Activated CD4-positive, alpha-beta memory T cell treated with anti-CD3 and anti-CD28 coated beads for 36 hours (primary cell): ENCODE measurements at regions of chr9 and their contacts with region 1.

Region 1: GRCh38 chr9:75238311-75238978 is 150.1 kb downstream of the OSTF1 start:
- DNase-seq: peak; percentile 51
- H3K4me3 Mint-ChIP-seq: no peak overlapping the region
- H3K27ac Mint-ChIP-seq: no peak overlapping the region
- H3K4me1 Mint-ChIP-seq: peaks cover 3% of the 10 kb centered on the region
- H3K27me3 Mint-ChIP-seq: no peaks in the 10 kb centered on the region

Region 2: DNA sequence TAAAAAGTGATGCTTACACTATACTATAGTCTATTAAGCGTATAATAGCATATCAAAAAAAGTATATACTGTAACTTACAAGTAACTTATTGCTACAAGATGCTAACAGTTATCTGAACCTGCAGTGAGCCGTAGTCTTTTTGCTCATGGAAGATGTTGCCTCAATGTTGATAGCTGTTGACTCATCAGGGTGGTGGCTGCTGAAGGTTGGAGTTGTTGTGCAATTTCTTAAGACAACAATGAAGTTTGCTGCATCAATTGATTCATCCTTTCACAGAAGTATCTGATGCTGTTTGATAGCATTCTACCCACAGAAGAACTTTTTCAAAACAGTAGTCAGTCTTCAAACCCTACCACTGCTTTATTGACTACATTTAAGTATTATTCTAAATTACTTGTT is 277.9 kb before region 1 on chr9:
- CTCF ChIA-PET with region 1: no interaction called
- POLR2A ChIA-PET with region 1: no interaction called
- intact Hi-C with region 1: no loop called
- DNase-seq: no peak
- H3K4me3 Mint-ChIP-seq: no peak overlapping the region
- H3K27ac Mint-ChIP-seq: no peak overlapping the region
- H3K4me1 Mint-ChIP-seq: no peaks in the 10 kb centered on the region
- H3K27me3 Mint-ChIP-seq: no peaks in the 10 kb centered on the region

Region 3: GRCh38 chr9:75142202-75142601 is 96.2 kb before region 1 on chr9:
- CTCF ChIA-PET with region 1: no interaction called
- POLR2A ChIA-PET with region 1: no interaction called
- intact Hi-C with region 1: no loop called
- DNase-seq: no peak
- H3K4me3 Mint-ChIP-seq: no peak overlapping the region
- H3K27ac Mint-ChIP-seq: peak overlapping the region; percentile 67
- H3K4me1 Mint-ChIP-seq: peaks cover 61% of the 10 kb centered on the region
- H3K27me3 Mint-ChIP-seq: no peaks in the 10 kb centered on the region

Region 4: DNA sequence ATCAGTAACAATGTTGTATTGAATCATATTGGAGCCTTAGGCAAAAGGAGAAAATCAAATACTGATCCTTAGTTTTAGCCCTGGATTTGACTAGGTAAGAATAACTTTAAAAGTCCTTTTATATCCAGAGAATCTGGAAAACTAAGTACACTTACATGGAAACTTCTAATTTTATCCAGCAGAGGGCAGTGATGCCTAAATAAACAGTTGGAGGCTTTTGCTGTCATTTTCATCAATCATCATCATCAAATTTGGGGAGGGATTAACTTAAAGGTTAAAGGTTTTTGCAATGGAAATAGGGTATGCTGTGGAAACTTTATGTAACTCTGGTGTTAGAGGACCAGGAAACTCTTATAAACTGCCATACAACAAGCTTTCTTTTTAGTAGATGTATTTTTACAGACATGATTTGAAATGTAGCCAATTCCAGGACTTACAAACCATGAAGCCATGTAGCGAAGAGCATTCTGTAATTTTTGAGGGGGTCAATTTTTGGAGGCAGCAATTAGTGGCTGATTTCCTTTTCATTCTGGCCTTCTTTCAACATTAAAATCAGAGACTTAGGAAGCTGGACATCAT is 37.5 kb before region 1 on chr9:
- CTCF ChIA-PET with region 1: interaction called, 31 read pairs
- POLR2A ChIA-PET with region 1: no interaction called
- intact Hi-C with region 1: loop called (anchors 1 kb)
- DNase-seq: no peak
- H3K4me3 Mint-ChIP-seq: no peak overlapping the region
- H3K27ac Mint-ChIP-seq: no peak overlapping the region
- H3K4me1 Mint-ChIP-seq: no peaks in the 10 kb centered on the region
- H3K27me3 Mint-ChIP-seq: no peaks in the 10 kb centered on the region

Region 5: GRCh38 chr9:75282047-75282446 is 43.6 kb after region 1 on chr9:
- CTCF ChIA-PET with region 1: no interaction called
- POLR2A ChIA-PET with region 1: no interaction called
- intact Hi-C with region 1: no loop called
- DNase-seq: no peak
- H3K4me3 Mint-ChIP-seq: no peak overlapping the region
- H3K27ac Mint-ChIP-seq: no peak overlapping the region
- H3K4me1 Mint-ChIP-seq: no peaks in the 10 kb centered on the region
- H3K27me3 Mint-ChIP-seq: no peaks in the 10 kb centered on the region